Activated T-helper 1 cell treated with anti-CD3 and anti-CD28 coated beads, Interleukin-12 subunit alpha, Interleukin-12 subunit beta, Interleukin-2, Interleukin-4 antibody, amounts not matched to agents 30 ng/mL and 10 ng/mL and 1 ng/mL, durations not matched to agents 14 hours and 24 hours and 36 hours (primary cell): ENCODE measurements at regions of chr9 and their contacts with region 1.

Region 1: DNA sequence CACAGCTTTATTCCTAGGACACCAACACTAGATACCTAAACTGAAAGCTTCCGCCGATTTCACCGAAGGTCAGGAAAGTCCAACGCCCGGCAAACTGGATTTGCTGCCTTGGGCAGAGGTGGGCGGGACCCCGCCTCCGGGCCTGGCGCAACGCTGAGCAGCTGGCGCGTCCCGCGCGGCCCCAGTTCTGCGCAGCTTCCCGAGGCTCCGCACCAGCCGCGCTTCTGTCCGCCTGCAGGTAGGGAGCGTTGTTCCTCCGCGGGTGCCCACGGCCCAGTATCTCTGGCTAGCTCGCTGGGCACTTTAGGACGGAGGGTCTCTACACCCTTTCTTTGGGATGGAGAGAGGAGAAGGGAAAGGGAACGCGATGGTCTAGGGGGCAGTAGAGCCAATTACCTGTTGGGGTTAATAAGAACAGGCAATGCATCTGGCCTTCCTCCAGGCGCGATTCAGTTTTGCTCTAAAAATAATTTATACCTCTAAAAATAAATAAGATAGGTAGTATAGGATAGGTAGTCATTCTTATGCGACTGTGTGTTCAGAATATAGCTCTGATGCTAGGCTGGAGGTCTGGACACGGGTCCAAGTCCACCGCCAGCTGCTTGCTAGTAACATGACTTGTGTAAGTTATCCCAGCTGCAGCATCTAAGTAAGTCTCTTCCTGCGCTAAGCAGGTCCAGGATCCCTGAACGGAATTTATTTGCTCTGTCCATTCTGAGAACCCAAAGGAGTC is at the start of gene CD274:
- DNase-seq: peak; percentile 85
- H3K4me3 Mint-ChIP-seq: peak within 1 kb of the TSS; percentile 96
- H3K27ac Mint-ChIP-seq: peak within 1 kb of the TSS; percentile 90
- H3K4me1 Mint-ChIP-seq: peaks cover 85% of the 10 kb centered on the region
- H3K27me3 Mint-ChIP-seq: no peaks in the 10 kb centered on the region
- total RNA-seq, gene CD274: 60.4 and 61.7 TPM in 2 replicates

Region 2: GRCh38 chr9:4939118-4939561 is 511.4 kb before region 1 on chr9:
- intact Hi-C with region 1: loop called (anchors 2 kb)
- DNase-seq: peak; percentile 33
- H3K4me3 Mint-ChIP-seq: peak overlapping the region; percentile 5
- H3K27ac Mint-ChIP-seq: peak overlapping the region; percentile 74
- H3K4me1 Mint-ChIP-seq: peaks cover 75% of the 10 kb centered on the region
- H3K27me3 Mint-ChIP-seq: no peaks in the 10 kb centered on the region

Region 3: DNA sequence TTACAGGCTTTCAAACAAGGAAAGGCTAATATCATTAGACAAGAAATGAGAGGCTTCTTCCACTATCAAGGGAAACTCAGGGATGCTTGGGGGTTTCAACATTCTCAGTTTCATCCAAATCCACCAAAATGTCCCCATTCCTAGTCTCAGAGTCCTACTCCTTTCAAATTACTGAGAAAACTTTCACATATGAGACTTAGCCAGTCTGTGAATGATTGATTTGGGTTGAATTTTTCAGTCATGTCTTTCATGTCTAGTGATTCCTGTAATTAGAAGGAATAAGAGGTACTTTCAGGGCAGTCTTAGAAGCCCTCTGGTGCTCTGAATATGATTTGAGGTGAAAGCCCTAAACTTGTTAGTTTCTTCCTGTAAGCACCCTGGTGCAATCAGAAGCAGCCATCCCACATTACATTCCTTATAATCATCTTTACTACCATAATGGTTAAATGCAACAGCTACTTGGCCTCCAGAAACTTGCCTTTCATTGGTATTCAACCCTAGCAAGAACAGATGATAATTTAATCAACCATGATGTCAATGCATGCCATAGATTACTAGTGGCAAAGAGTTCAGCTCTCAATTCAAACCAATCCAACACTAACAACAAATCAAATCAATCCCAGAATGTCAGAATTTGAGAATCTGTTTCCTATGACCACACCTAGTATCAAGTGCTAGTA is 127.6 kb after region 1 on chr9:
- intact Hi-C with region 1: loop called (anchors 1 kb)
- DNase-seq: no peak
- H3K4me3 Mint-ChIP-seq: no peak overlapping the region
- H3K27ac Mint-ChIP-seq: peak overlapping the region; percentile 21
- H3K4me1 Mint-ChIP-seq: peaks cover 51% of the 10 kb centered on the region
- H3K27me3 Mint-ChIP-seq: no peaks in the 10 kb centered on the region

Region 4: GRCh38 chr9:5596173-5596572 is 145.6 kb after region 1 on chr9:
- intact Hi-C with region 1: loop called (anchors 1 kb)
- DNase-seq: no peak
- H3K4me3 Mint-ChIP-seq: no peak overlapping the region
- H3K27ac Mint-ChIP-seq: no peak overlapping the region
- H3K4me1 Mint-ChIP-seq: peaks cover 29% of the 10 kb centered on the region
- H3K27me3 Mint-ChIP-seq: no peaks in the 10 kb centered on the region

Region 5: GRCh38 chr9:5843794-5844504 is 393.4 kb after region 1 on chr9:
- intact Hi-C with region 1: loop called (anchors 5 kb)
- DNase-seq: no peak
- H3K4me3 Mint-ChIP-seq: peak overlapping the region; percentile 69
- H3K27ac Mint-ChIP-seq: peak overlapping the region; percentile 88
- H3K4me1 Mint-ChIP-seq: peaks cover 88% of the 10 kb centered on the region
- H3K27me3 Mint-ChIP-seq: no peaks in the 10 kb centered on the region